PC-9 (cell line): ENCODE measurements at regions of chr19 and their contacts with region 1.

Region 1: GRCh38 chr19:1592755-1593500 is at the start of gene MBD3:
- DNase-seq: peak; percentile 71 to 93
- H3K4me3 ChIP-seq: peak within 1 kb of the TSS; percentile 78
- H3K27ac ChIP-seq: peak within 1 kb of the TSS; percentile 88
- H3K4me1 ChIP-seq: peaks cover 7% of the 10 kb centered on the region; the same call in 1 of the 2 replicates
- H3K27me3 ChIP-seq: no peaks in the 10 kb centered on the region
- CTCF ChIP-seq: no peak
- total RNA-seq, gene MBD3: 129 and 143 TPM in 2 replicates

Region 2: DNA sequence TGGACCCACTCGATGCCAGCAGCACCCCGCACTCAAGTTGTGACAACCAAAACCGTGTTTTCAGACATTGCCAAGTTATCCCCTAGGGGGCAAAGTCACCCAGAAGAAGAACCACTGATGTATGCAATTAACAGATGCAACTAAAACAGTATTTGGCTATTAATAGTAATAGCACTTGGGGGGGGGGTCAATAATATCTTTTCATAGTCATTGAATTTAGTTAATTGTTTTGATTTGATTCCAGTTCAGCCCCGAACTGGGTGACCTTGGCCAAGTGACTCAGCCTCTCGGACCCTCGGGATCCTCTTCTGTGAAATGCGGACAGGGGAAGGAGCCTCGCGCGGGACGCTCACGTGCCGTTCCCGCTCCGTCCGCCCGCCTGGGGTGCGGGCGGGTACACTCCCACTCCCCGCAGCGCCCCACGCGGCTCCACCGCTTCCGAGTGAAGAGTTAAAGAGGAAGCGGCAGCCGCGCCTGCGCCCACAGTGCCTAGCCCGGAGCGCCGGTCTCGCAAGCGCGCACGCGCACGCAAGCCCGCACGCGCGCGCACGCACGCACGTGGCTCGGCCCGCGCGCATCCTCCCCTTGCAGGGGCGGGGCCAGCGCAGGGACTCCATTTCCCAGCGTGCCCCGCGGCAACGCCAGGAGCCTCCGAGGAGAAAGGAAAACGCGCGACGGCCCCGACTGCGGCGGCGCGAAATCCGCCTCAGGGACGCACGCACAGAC is 186.0 kb before region 1 on chr19:
- CTCF ChIA-PET with region 1: no interaction called
- POLR2A ChIA-PET with region 1: no interaction called
- intact Hi-C with region 1: loop called (anchors 2 kb)
- DNase-seq: peak; percentile 83 to 98
- H3K4me3 ChIP-seq: peak overlapping the region; percentile 68
- H3K27ac ChIP-seq: peak overlapping the region; percentile 51
- H3K4me1 ChIP-seq: peaks cover 22% of the 10 kb centered on the region
- H3K27me3 ChIP-seq: no peaks in the 10 kb centered on the region
- CTCF ChIP-seq: peak; percentile 60

Region 3: GRCh38 chr19:1455336-1456120 is 137.4 kb before region 1 on chr19:
- CTCF ChIA-PET with region 1: no interaction called
- POLR2A ChIA-PET with region 1: interaction called, 13 read pairs
- intact Hi-C with region 1: no loop called
- DNase-seq: peak; percentile 91 to 93
- H3K4me3 ChIP-seq: peak overlapping the region; percentile 50; the same call in 1 of the 2 replicates
- H3K27ac ChIP-seq: peak overlapping the region; percentile 30; the same call in 1 of the 2 replicates
- H3K4me1 ChIP-seq: no peaks in the 10 kb centered on the region
- H3K27me3 ChIP-seq: no peaks in the 10 kb centered on the region
- CTCF ChIP-seq: no peak

Region 4: GRCh38 chr19:1605236-1606137 is 12.6 kb after region 1 on chr19 and contains the start of gene UQCR11:
- CTCF ChIA-PET with region 1: no interaction called
- POLR2A ChIA-PET with region 1: interaction called, 14 read pairs
- intact Hi-C with region 1: no loop called
- DNase-seq: peak; percentile 86 to 92
- H3K4me3 ChIP-seq: peak within 1 kb of the TSS; percentile 92
- H3K27ac ChIP-seq: peak within 1 kb of the TSS; percentile 73
- H3K4me1 ChIP-seq: peaks cover 26% of the 10 kb centered on the region
- H3K27me3 ChIP-seq: no peaks in the 10 kb centered on the region
- CTCF ChIP-seq: peak; percentile 57; the same call in 1 of the 2 replicates
- total RNA-seq, gene UQCR11: 196 and 275 TPM in 2 replicates

Region 5: GRCh38 chr19:1789261-1790041 is 196.5 kb after region 1 on chr19:
- CTCF ChIA-PET with region 1: interaction called, 21 read pairs
- POLR2A ChIA-PET with region 1: no interaction called
- intact Hi-C with region 1: no loop called
- DNase-seq: peak in 1 of 2 experiments; percentile 17
- H3K4me3 ChIP-seq: no peak overlapping the region; the same call in 1 of the 2 replicates
- H3K27ac ChIP-seq: no peak overlapping the region
- H3K4me1 ChIP-seq: no peaks in the 10 kb centered on the region
- H3K27me3 ChIP-seq: no peaks in the 10 kb centered on the region
- CTCF ChIP-seq: no peak

Region 6: DNA sequence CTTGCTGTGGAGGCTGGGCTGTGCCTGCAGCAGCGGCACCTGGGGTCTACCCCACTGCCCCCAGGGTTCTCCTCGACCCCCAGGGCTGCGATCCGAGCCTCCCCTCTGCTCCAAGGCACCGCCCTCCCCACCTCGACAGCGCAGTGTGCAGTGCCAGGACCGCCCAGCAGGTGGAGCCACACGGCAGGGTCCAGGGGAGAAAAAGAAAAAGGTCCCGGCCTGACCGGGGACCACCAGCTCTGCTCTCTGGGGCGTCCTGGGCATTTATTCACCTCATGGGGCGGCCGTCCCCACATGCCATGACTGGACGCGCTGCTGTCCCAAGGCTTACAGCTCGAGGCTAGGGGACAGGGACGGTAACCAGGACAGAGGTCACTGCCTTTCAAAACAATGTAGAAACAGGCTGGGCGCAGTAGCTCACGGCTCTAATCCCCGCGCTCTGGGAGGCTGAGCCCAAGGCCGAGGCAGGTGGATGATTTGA is 244.7 kb after region 1 on chr19:
- CTCF ChIA-PET with region 1: interaction called, 26 read pairs
- POLR2A ChIA-PET with region 1: no interaction called
- intact Hi-C with region 1: no loop called
- DNase-seq: peak in 1 of 2 experiments; percentile 24
- H3K4me3 ChIP-seq: no peak overlapping the region
- H3K27ac ChIP-seq: no peak overlapping the region
- H3K4me1 ChIP-seq: no peaks in the 10 kb centered on the region
- H3K27me3 ChIP-seq: no peaks in the 10 kb centered on the region
- CTCF ChIP-seq: peak; percentile 85